Heart left ventricle (tissue), 16 donors: ENCODE measurements at regions of chr19 and their contacts with region 1.

Region 1: GRCh38 chr19:32570081-32570785 is 10.8 kb upstream of the PDCD5 start:
- DNase-seq: peak in 4 of 5 donors; percentile 19 to 46 (median 34)
- ATAC-seq: peak in 3 of 4 donors; percentile 76 to 80 (median 79)
- H3K4me3 ChIP-seq: no peak overlapping the region
- H3K27ac ChIP-seq: no peak overlapping the region
- H3K4me1 ChIP-seq: no peaks in the 10 kb centered on the region
- H3K27me3 ChIP-seq: peaks cover 0 to 40% (median 4%) of the 10 kb centered on the region in 9 donors
- CTCF ChIP-seq: peak; percentile 29 to 69 (median 63)
- POLR2A ChIP-seq: no peak

Region 2: GRCh38 chr19:30669329-30670010 is 1900.8 kb before region 1 on chr19:
- intact Hi-C with region 1: loop called in 1 of 10 experiments (anchors 5 kb)
- DNase-seq: peak; percentile 30 to 84 (median 57)
- ATAC-seq: peak in 3 of 4 donors; percentile 12 to 26 (median 21)
- H3K4me3 ChIP-seq: no peak overlapping the region
- H3K27ac ChIP-seq: no peak overlapping the region
- H3K4me1 ChIP-seq: peaks cover 0 to 25% (median 6%) of the 10 kb centered on the region in 12 donors
- H3K27me3 ChIP-seq: peaks cover 0 to 36% (median 11%) of the 10 kb centered on the region in 9 donors
- CTCF ChIP-seq: peak; percentile 61 to 85 (median 81)
- POLR2A ChIP-seq: no peak

Region 3: DNA sequence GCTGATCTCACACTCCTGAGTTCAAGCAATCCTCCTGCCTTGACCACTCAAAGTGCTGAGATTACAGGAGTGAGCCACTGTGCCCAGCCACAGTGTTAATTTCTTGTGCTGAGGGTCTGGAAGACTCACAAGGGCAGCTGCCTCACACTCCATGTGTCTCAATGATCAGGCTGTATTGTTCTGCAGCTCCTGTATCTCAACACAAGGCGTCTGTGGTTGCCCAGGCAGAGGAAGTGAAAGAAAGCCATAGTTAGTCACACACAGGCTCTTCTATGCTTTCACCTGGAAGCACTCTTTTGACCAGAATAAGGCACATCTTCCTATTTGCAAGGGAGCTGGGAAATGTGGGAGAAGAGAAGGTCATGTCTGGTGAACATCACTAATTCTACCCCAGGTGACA is 332.2 kb before region 1 on chr19:
- intact Hi-C with region 1: no loop called
- DNase-seq: no peak
- ATAC-seq: no peak
- H3K4me3 ChIP-seq: no peak overlapping the region
- H3K27ac ChIP-seq: no peak overlapping the region
- H3K4me1 ChIP-seq: no peaks in the 10 kb centered on the region
- H3K27me3 ChIP-seq: peaks cover 0 to 33% (median 0%) of the 10 kb centered on the region in 9 donors
- CTCF ChIP-seq: no peak
- POLR2A ChIP-seq: no peak

Region 4: GRCh38 chr19:32287811-32288227 is 282.4 kb before region 1 on chr19:
- intact Hi-C with region 1: loop called in 8 of 10 experiments (anchors 2 to 5 kb)
- DNase-seq: peak; percentile 62 to 83 (median 80)
- ATAC-seq: peak; percentile 58 to 94 (median 76)
- H3K4me3 ChIP-seq: no peak overlapping the region
- H3K27ac ChIP-seq: peak overlapping the region in 3 of 12 donors; percentile 6 to 24 (median 9)
- H3K4me1 ChIP-seq: peaks cover 0 to 7% (median 0%) of the 10 kb centered on the region in 12 donors
- H3K27me3 ChIP-seq: peaks cover 0 to 12% (median 0%) of the 10 kb centered on the region in 9 donors
- CTCF ChIP-seq: peak; percentile 16 to 64 (median 45)
- POLR2A ChIP-seq: no peak

Region 5: DNA sequence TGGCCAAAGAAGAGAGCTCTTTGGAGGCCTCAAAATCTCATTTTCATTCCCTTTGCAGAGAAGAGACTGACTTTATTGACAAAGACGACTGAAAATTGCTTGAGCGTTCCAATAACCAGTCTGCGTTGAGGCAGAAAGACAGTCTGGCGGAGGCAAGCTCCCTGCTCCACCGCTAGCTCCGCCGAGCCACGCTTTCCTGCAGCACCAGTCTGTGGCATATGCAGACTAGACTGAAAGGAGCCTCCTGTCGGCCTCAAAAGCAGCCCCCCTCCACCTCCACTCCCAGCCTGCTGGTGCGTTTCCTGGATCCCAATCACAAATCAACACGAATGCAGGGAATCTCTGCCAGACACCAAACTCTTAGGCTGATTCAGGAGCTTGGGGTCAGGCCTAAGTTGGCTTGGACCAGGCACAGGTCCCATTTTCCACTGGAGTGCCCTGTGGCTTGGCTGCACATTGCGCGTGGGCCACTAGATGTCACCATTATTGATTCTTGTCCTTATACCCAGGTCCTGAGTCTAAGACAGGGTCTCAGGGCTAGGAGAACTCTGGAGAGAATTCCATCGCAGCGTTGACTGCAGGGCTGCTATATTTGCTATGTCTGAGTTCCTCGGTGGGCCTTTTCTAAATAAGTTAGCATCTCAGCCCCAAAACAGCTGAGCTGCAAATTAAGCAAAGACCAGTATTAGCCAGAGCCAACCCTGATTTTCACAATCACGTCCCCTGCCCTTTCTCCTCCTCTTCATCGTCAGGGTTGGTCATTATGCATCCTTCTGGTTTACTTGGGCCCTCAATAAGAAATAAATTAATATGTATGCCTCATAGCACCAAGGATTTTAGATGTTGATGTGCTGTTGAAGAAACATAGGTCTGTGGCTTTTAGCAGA is 230.0 kb before region 1 on chr19:
- intact Hi-C with region 1: loop called in 7 of 10 experiments (anchors 2 to 10 kb)
- DNase-seq: peak; percentile 59 to 80 (median 77)
- ATAC-seq: peak; percentile 72 to 90 (median 88)
- H3K4me3 ChIP-seq: no peak overlapping the region
- H3K27ac ChIP-seq: peak overlapping the region in 2 of 12 donors; percentile 9 to 29
- H3K4me1 ChIP-seq: peaks cover 0 to 12% (median 0%) of the 10 kb centered on the region in 12 donors
- H3K27me3 ChIP-seq: peaks cover 0 to 83% (median 0%) of the 10 kb centered on the region in 9 donors
- CTCF ChIP-seq: peak; percentile 46 to 79 (median 64)
- POLR2A ChIP-seq: no peak

Region 6: DNA sequence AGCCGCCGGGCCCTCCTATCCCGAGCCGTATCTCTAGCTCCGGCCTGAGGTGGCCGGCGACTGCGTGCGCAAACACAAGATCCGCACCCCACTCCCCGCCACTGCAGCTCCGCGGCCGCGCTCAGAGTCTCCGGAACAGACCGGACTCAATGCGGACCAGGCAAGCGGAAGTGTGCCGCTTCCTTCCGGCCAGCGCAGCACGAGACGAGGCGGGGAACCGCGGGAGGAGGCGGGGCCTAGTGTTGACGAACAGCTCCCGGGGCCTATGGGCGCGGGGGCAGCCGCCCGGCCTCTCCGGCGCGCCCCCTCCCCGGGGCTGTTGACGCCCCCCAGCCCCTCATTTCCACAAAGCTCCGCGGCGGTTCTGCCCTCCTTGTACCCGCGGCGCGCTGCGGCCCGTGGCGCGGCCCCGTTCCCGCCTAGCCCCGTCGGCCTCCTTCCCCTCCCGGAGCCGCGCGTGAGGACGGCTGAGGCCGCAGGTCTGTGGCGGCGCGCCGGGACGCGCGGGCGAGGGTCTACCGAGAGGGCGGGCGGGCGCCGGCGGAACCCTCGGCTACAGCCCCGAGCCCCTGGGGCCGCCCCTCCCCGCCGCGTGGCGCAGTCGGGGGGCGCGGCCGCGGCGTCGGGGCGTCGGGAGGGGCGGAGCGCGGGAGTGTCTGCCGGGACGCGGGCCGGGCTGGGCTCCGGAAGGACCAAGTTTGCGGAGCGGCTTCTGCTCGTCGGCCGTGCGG is 164.6 kb before region 1 on chr19 and contains the start of gene DPY19L3:
- intact Hi-C with region 1: loop called in 1 of 10 experiments (anchors 10 kb)
- DNase-seq: peak; percentile 95 to 97 (median 96)
- ATAC-seq: peak; percentile 99 to 100 (median 99)
- H3K4me3 ChIP-seq: peak within 1 kb of the TSS; percentile 73 to 97 (median 86)
- H3K27ac ChIP-seq: peak within 1 kb of the TSS; percentile 90 to 99 (median 98)
- H3K4me1 ChIP-seq: peaks cover 0 to 26% (median 14%) of the 10 kb centered on the region in 12 donors
- H3K27me3 ChIP-seq: no peaks in the 10 kb centered on the region
- CTCF ChIP-seq: peak in 1 of 12 donors; percentile 20
- POLR2A ChIP-seq: peak in 1 of 2 donors; percentile 93
- total RNA-seq, gene DPY19L3: 3.6 to 15.2 (median 8.7) TPM